Dorsolateral prefrontal cortex (tissue), 120 donors: ENCODE measurements at regions of chr10 and their contacts with region 1.

Region 1: DNA sequence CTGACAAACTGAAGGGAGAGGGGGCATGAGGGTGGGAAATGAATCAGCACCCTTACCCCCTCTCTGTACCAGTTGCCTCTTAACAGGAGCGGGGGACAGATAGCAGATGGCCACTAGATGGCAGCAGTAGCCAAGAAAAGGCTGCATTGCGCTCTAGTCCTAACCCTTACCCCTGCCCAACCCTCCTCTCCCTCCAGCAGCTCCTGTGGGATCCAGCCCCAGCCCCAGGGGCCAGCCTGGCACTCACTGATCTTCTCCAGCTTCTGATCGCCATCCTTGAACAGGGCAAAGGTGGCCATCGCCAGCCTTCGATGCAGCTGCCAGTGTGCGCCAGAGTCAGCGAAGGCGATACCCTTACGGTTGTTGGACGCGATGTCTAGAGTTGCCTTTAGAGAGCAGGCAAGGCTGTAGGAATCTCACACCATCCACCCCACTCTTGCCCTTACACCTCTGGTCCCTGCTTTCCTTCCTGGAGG is 2.2 kb downstream of the CYP17A1 start:
- DNase-seq: peak; percentile 50 to 81 (median 70)
- H3K4me3 ChIP-seq: peak overlapping the region in 3 of 59 donors; percentile 2 to 21 (median 4)
- H3K27ac ChIP-seq: no peak overlapping the region
- H3K27me3 ChIP-seq: peaks cover 0 to 14% (median 0%) of the 10 kb centered on the region in 45 donors
- CTCF ChIP-seq: peak; percentile 44 to 93 (median 86)

Region 2: GRCh38 chr10:102904346-102904745 is 69.3 kb after region 1 on chr10:
- intact Hi-C with region 1: loop called (anchors 5 kb)
- DNase-seq: no peak
- H3K4me3 ChIP-seq: no peak overlapping the region
- H3K27ac ChIP-seq: no peak overlapping the region
- H3K27me3 ChIP-seq: no peaks in the 10 kb centered on the region
- CTCF ChIP-seq: no peak

Region 3: DNA sequence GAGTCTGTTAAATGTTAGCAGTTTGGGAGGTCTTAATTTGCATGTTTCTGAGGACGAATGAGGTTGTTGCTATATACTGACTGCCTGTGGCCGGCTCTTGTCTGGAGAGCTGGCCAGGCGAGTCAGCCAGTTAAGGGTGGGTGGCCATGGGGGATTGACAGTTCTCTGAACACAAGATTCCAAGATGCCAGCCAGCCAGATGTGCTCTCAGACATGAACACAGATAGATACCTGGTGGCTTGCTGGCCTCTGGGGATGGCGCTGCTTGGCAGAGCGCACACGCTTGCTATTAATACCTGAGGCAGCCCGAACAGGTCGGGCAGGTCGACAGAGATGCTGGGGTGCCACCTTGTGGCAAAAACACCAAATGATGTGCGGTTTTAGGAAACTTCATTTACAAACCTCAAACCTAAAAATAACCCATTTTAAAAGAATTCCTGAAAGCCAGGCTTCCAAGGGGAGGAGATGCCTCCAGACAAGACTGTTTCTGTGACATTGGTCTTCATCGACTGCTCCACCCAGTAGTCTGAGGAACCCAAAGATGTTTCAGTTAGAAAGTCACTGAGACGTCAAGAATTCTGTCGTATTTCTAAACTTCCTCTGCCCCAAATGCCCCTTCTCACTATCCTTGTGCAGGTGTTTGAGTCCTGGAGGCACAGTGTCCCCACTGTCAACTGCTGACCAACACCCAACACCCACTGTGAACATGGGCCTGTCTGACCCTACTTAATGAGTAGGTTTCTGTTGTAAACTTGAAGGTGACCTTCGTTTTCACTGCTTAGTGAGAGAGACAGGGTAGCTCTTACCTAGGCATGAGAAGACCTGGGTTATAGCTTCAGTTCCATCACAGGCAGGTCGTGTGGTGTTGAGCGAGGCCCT is 234.6 kb after region 1 on chr10:
- intact Hi-C with region 1: loop called in 1 of 2 experiments (anchors 10 kb)
- DNase-seq: peak in 8 of 10 donors; percentile 60 to 77 (median 65)
- H3K4me3 ChIP-seq: peak overlapping the region in 1 of 59 donors; percentile 30
- H3K27ac ChIP-seq: peak overlapping the region in 11 of 59 donors; percentile 5 to 48 (median 25)
- H3K27me3 ChIP-seq: no peaks in the 10 kb centered on the region
- CTCF ChIP-seq: peak; percentile 33 to 80 (median 68)

Region 4: DNA sequence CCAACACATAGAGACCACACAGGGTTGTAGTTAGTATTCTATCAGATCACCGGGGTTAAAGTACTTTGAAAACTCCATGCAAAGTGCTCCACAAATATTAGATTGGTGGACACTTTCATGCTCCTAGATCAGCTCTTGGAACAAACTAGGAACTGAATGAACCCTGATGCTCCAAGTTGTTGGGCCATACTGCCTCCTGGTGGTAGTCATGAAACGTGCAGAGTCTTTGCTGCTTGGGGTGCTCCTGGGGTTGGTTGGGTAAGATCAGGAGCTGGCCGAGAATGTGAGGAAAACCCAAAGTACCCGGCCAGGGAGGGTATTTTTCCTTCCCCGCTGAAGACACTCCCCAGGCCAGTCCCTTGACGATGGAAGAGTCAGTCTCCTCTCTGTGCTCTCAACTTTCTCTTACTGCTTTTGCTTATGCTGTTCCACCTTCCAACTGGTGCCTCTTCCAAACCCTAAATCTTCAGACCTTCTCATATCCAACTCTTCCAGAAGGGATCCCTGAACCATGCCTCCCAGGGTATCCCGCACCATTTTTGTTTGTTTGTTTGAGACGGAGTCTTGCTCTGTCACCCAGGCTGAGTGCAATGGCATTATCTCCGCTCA is 409.7 kb after region 1 on chr10:
- intact Hi-C with region 1: loop called in 1 of 2 experiments (anchors 5 kb)
- DNase-seq: peak; percentile 41 to 82 (median 70)
- H3K4me3 ChIP-seq: peak overlapping the region in 2 of 59 donors; percentile 6 to 31
- H3K27ac ChIP-seq: no peak overlapping the region
- H3K27me3 ChIP-seq: no peaks in the 10 kb centered on the region
- CTCF ChIP-seq: peak; percentile 52 to 96 (median 88)

Region 5: DNA sequence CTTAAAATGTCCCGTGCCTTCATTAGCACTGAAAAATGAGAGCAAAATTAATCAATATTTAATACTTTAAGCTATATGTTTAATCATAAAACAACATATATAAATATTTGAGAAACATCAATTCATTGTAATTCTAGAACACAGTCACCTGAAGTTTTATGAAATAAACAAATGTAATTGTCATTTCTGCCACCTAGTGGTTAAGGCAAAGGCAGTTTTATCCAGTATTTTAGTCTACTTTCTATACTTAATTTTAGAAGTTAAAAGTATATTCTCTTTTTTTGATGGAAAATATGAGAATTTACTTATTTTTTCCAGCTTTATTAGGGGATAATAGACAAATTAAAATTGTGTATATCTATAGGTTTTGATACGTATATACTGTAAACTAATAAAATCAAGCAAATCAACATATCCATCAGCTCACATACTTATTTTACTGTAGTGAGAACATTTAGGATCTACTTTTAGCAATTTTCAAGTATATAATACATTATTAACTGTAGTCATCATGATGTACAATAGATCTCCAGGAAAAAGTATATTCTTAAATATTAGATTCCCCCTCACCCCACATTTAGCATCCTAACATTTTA is 499.0 kb after region 1 on chr10:
- intact Hi-C with region 1: loop called in 1 of 2 experiments (anchors 10 kb)
- DNase-seq: no peak
- H3K4me3 ChIP-seq: no peak overlapping the region
- H3K27ac ChIP-seq: no peak overlapping the region
- H3K27me3 ChIP-seq: no peaks in the 10 kb centered on the region
- CTCF ChIP-seq: peak; percentile 33 to 78 (median 65)